Gastrocnemius medialis (tissue), 4 donors: ENCODE measurements at regions of chrX and their contacts with region 1.

Region 1: GRCh38 chrX:129982274-129983251 is at the start of gene BCORL1:
- DNase-seq: peak; percentile 84 to 87
- ATAC-seq: peak; percentile 80
- H3K4me3 ChIP-seq: peak within 1 kb of the TSS in 1 of 4 donors; percentile 65
- H3K27ac ChIP-seq: peak within 1 kb of the TSS in 3 of 4 donors; percentile 76 to 81 (median 78)
- H3K4me1 ChIP-seq: peaks cover 0 to 10% of the 10 kb centered on the region in 2 donors
- H3K27me3 ChIP-seq: no peaks in the 10 kb centered on the region
- CTCF ChIP-seq: no peak
- POLR2A ChIP-seq: peak; percentile 73 to 84
- total RNA-seq, gene BCORL1: 1.1 to 3.6 (median 2.4) TPM

Region 2: GRCh38 chrX:129843459-129844306 is 138.9 kb before region 1 on chrX and contains the start of gene ZDHHC9:
- in situ Hi-C with region 1: no loop called
- intact Hi-C with region 1: loop called (anchors 5 kb)
- DNase-seq: peak; percentile 77 to 84
- ATAC-seq: peak; percentile 94 to 95
- H3K4me3 ChIP-seq: peak within 1 kb of the TSS; percentile 68 to 77 (median 72)
- H3K27ac ChIP-seq: peak within 1 kb of the TSS; percentile 76 to 89 (median 84)
- H3K4me1 ChIP-seq: no peaks in the 10 kb centered on the region
- H3K27me3 ChIP-seq: no peaks in the 10 kb centered on the region
- CTCF ChIP-seq: peak in 1 of 5 experiments; percentile 21
- POLR2A ChIP-seq: peak; percentile 54 to 61
- total RNA-seq, gene ZDHHC9: 7.9 to 25.3 (median 14.7) TPM

Region 3: GRCh38 chrX:130028196-130028595 is 45.6 kb after region 1 on chrX:
- in situ Hi-C with region 1: no loop called
- intact Hi-C with region 1: loop called (anchors 5 kb)
- DNase-seq: peak in 1 of 2 donors; percentile 19
- ATAC-seq: peak in 1 of 2 donors; percentile 49
- H3K4me3 ChIP-seq: no peak overlapping the region
- H3K27ac ChIP-seq: no peak overlapping the region
- H3K4me1 ChIP-seq: no peaks in the 10 kb centered on the region
- H3K27me3 ChIP-seq: no peaks in the 10 kb centered on the region
- CTCF ChIP-seq: peak; percentile 46 to 77 (median 52)
- POLR2A ChIP-seq: no peak

Region 4: DNA sequence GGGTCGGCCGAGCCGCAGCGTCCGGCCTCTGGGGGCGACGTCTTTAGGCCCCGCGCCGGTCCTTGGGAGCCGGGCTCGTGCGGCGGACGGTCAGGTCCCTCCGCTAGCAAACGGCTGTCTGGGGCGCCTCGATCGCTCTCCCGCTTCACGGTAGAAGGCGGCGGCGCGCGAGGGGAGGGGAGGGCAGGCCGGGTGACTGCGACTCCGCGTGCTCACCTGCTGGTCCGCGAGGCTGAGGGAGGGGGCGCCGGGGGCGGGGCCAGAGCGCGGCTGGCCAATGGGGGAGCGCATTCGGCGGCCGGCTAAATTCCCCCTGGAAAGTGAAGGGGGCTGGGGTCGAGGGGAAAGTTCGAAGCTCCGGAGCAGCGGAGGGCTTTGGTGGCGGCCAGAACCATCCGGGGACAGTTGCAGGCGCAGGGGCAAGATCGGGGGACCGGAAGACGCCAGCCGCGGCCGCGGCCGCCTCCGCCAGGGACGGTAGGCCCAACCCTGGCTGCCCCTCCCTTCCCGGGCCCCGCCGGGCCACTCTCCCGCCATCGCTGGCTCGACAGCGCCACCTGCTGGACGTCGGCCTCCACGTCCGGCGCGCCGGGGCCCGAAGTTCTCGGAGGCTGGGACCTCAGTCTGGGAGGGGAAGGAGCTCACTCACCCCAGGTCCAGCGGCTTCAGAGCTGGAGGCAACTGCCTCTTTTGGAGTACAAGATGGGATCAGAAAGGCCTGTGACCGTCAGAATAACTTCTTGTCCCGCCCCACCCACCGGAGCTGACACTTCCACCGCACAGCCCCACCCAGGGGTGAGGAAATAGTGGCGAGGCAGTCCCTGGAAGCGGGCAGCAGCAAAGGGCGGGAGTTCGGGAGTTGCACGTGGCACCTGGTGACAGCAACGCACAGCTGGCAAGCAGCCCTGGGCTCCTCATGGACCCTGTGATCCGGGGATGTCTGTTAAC is 77.8 kb after region 1 on chrX:
- in situ Hi-C with region 1: no loop called
- intact Hi-C with region 1: loop called (anchors 2 kb)
- DNase-seq: peak; percentile 45 to 65
- ATAC-seq: peak; percentile 91 to 94
- H3K4me3 ChIP-seq: peak overlapping the region; percentile 56 to 70 (median 58)
- H3K27ac ChIP-seq: peak overlapping the region; percentile 64 to 76 (median 68)
- H3K4me1 ChIP-seq: peaks cover 0 to 6% of the 10 kb centered on the region in 2 donors
- H3K27me3 ChIP-seq: no peaks in the 10 kb centered on the region
- CTCF ChIP-seq: peak; percentile 80 to 92 (median 88)
- POLR2A ChIP-seq: no peak

Region 5: GRCh38 chrX:130165703-130166502 is 183.3 kb after region 1 on chrX and contains the start of gene AIFM1:
- in situ Hi-C with region 1: no loop called
- intact Hi-C with region 1: loop called (anchors 5 kb)
- DNase-seq: peak; percentile 89 to 93
- ATAC-seq: peak; percentile 92 to 98
- H3K4me3 ChIP-seq: peak within 1 kb of the TSS; percentile 62 to 81 (median 74)
- H3K27ac ChIP-seq: peak within 1 kb of the TSS; percentile 88 to 94 (median 90)
- H3K4me1 ChIP-seq: peaks cover 11 to 18% of the 10 kb centered on the region in 2 donors
- H3K27me3 ChIP-seq: no peaks in the 10 kb centered on the region
- CTCF ChIP-seq: no peak
- POLR2A ChIP-seq: peak; percentile 61 to 69
- total RNA-seq, gene AIFM1: 18.9 to 50.1 (median 30.0) TPM